CD4-positive, alpha-beta memory T cell (primary cell): ENCODE measurements at regions of chr17 and their contacts with region 1.

Region 1: DNA sequence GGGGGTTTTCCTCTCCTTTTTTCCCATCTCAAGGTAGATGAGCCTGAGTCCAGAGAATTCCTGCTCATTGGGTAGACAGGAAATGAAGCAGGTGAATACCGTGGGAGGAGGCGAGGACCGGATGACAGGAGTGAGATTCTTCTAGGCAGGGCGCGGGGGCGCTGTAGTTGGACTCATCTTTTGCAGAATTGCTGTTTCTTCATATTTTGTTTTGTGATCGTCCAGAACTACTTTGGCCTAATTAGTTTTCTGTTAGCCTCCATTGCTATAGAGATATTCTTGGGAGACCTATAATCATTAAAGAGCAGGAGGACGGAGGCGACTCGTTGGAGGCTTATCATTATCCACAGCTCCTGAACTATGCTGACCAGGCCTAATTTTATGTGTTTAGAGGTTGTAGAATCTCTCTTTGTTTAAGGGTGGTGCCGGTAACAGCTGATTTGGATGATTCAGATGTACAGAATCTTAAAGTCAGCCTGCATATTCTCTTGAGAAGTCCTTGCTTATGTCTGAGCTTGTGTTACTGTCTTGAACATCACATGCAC is 650 bp downstream of the ATP6V0A1 start:
- DNase-seq: no peak
- H3K4me3 ChIP-seq: peak overlapping the region; percentile 56 to 67
- H3K4me3 Mint-ChIP-seq: peak overlapping the region; percentile 85 to 94 (median 91)
- H3K27ac ChIP-seq: peak overlapping the region; percentile 42
- H3K27ac Mint-ChIP-seq: peak overlapping the region; percentile 86 to 93 (median 90)
- H3K4me1 ChIP-seq: peaks cover 45% of the 10 kb centered on the region
- H3K4me1 Mint-ChIP-seq: peaks cover 31 to 43% (median 40%) of the 10 kb centered on the region in 4 donors
- H3K27me3 ChIP-seq: no peaks in the 10 kb centered on the region
- H3K27me3 Mint-ChIP-seq: no peaks in the 10 kb centered on the region

Region 2: GRCh38 chr17:42422958-42423712 is 36.2 kb before region 1 on chr17 and contains the start of gene CAVIN1:
- CTCF ChIA-PET with region 1: interaction called, 5 read pairs
- POLR2A ChIA-PET with region 1: interaction called, 3 read pairs
- intact Hi-C with region 1: loop called (anchors 5 kb)
- DNase-seq: no peak
- H3K4me3 ChIP-seq: peak within 1 kb of the TSS in 1 of 2 donors; percentile 53
- H3K4me3 Mint-ChIP-seq: peak within 1 kb of the TSS; percentile 76 to 95 (median 84)
- H3K27ac ChIP-seq: no peak within 1 kb of the TSS
- H3K27ac Mint-ChIP-seq: peak within 1 kb of the TSS in 4 of 7 donors; percentile 2 to 35 (median 22)
- H3K4me1 ChIP-seq: peaks cover 17% of the 10 kb centered on the region
- H3K4me1 Mint-ChIP-seq: peaks cover 4 to 21% (median 12%) of the 10 kb centered on the region in 4 donors
- H3K27me3 ChIP-seq: peaks cover 12% of the 10 kb centered on the region
- H3K27me3 Mint-ChIP-seq: peaks cover 7 to 20% of the 10 kb centered on the region in 2 donors
- total RNA-seq, gene CAVIN1: 0.52 to 0.61 TPM

Region 3: DNA sequence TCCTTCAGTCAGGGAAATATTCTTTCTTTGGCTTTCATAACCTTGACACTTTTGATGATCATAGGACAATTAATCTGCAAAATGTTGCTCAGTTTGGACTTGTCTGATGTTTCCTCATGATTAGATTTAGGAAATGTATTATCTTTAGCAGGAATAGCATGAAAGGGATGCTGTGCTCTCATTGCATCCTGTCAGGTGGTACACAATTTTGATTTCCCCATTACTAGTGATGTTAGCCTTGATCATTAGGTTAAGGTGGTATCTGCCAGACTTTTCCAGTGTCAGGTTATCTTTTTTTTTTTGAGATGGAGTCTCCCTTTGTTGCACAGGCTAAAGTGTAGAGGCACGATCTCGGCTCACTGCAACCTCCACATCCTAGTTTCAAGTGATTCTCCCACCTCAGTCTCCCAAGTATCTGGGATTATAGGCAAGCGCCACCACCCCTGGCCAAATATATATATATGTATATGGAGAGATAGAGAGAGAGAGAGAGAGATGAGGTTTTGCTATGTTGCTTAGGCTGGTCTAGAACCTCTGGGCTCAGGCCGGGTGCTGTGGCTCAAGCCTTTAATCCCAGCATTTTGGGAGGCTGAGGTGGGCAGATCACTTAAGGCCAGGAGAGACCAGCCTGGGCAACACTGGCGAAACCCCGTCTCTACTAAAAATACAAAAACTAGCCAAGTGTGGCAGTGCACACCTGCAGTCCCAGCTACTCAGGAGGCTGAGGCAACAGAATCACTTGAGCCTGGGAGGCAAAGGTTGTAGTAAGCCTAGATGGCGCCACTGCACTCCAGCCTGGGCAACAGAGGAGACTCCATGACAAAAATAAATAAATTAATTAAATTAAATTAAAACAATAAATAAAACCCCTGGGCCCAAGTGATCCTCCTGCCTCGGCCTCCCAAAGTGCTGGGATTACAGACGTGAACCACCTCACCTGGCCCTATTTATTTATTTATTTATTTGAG is 20.4 kb before region 1 on chr17:
- CTCF ChIA-PET with region 1: interaction called, 9 read pairs
- POLR2A ChIA-PET with region 1: interaction called, 3 read pairs
- intact Hi-C with region 1: loop called (anchors 1 kb)
- DNase-seq: peak in 2 of 5 donors; percentile 34 to 38
- H3K4me3 ChIP-seq: no peak overlapping the region
- H3K4me3 Mint-ChIP-seq: no peak overlapping the region
- H3K27ac ChIP-seq: no peak overlapping the region
- H3K27ac Mint-ChIP-seq: no peak overlapping the region
- H3K4me1 ChIP-seq: peaks cover 9% of the 10 kb centered on the region
- H3K4me1 Mint-ChIP-seq: peaks cover 5 to 15% (median 10%) of the 10 kb centered on the region in 4 donors
- H3K27me3 ChIP-seq: no peaks in the 10 kb centered on the region
- H3K27me3 Mint-ChIP-seq: peaks cover 3 to 5% of the 10 kb centered on the region in 2 donors

Region 4: DNA sequence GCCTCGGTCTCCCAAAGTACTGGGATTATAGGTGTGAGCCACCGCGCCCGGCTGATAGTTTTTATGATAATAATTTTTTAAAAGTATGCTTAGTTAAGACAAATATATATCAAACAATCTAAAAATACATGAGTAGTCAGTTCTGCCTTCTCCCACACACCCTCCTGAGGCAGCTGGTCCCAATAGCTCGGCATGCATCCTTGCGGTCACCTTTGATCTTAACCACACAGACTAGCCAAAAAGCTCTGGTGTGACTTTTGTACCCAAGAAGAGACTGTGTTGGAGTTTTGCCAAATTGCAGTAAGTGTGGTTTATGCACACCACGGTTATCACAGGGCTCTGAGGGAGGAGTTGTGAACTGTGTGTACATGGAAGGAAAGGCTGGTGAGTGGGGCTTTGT is 25.0 kb after region 1 on chr17:
- CTCF ChIA-PET with region 1: interaction called, 4 read pairs
- POLR2A ChIA-PET with region 1: interaction called, 11 read pairs
- intact Hi-C with region 1: loop called (anchors 1 kb)
- DNase-seq: peak; percentile 87 to 92 (median 88)
- H3K4me3 ChIP-seq: peak overlapping the region in 1 of 2 donors; percentile 5
- H3K4me3 Mint-ChIP-seq: peak overlapping the region; percentile 10 to 77 (median 71)
- H3K27ac ChIP-seq: no peak overlapping the region
- H3K27ac Mint-ChIP-seq: peak overlapping the region in 6 of 7 donors; percentile 5 to 93 (median 70)
- H3K4me1 ChIP-seq: peaks cover 30% of the 10 kb centered on the region
- H3K4me1 Mint-ChIP-seq: peaks cover 19 to 41% (median 30%) of the 10 kb centered on the region in 4 donors
- H3K27me3 ChIP-seq: no peaks in the 10 kb centered on the region
- H3K27me3 Mint-ChIP-seq: peaks cover 0 to 1% of the 10 kb centered on the region in 2 donors

Region 5: DNA sequence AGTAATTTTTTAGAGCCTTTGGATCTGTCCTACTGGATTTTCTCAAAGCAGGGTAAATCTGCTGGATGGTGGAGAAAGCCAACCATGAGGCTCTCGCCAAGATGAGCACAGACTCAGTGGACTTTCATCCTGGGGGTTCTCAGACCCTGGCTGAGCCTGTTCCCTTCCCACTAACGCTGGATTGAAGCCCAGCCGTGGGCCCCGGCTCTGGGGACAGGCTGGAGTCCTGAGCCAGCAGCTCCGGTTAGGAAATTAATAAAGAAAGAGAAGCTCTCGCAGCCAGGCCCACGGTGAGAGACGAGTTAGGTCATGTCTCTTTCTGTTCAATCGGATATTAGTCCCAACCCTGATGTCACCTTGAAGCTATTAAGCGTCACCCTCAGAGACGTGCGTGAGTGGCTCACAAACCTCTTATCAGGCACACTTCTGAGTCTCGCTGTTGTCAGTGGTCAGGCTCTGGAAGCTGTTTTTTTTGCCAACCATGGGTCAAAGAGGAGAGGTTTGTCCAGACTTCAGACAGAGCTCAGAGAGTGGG is 1175.3 kb after region 1 on chr17:
- CTCF ChIA-PET with region 1: no interaction called
- POLR2A ChIA-PET with region 1: no interaction called
- intact Hi-C with region 1: no loop called
- DNase-seq: no peak
- H3K4me3 ChIP-seq: no peak overlapping the region
- H3K4me3 Mint-ChIP-seq: no peak overlapping the region
- H3K27ac ChIP-seq: no peak overlapping the region
- H3K27ac Mint-ChIP-seq: no peak overlapping the region
- H3K4me1 ChIP-seq: no peaks in the 10 kb centered on the region
- H3K4me1 Mint-ChIP-seq: no peaks in the 10 kb centered on the region
- H3K27me3 ChIP-seq: no peaks in the 10 kb centered on the region
- H3K27me3 Mint-ChIP-seq: peaks cover 1 to 6% of the 10 kb centered on the region in 2 donors